ENCODE measurements at regions of chr16 and their contacts with region 1.

Region 1: DNA sequence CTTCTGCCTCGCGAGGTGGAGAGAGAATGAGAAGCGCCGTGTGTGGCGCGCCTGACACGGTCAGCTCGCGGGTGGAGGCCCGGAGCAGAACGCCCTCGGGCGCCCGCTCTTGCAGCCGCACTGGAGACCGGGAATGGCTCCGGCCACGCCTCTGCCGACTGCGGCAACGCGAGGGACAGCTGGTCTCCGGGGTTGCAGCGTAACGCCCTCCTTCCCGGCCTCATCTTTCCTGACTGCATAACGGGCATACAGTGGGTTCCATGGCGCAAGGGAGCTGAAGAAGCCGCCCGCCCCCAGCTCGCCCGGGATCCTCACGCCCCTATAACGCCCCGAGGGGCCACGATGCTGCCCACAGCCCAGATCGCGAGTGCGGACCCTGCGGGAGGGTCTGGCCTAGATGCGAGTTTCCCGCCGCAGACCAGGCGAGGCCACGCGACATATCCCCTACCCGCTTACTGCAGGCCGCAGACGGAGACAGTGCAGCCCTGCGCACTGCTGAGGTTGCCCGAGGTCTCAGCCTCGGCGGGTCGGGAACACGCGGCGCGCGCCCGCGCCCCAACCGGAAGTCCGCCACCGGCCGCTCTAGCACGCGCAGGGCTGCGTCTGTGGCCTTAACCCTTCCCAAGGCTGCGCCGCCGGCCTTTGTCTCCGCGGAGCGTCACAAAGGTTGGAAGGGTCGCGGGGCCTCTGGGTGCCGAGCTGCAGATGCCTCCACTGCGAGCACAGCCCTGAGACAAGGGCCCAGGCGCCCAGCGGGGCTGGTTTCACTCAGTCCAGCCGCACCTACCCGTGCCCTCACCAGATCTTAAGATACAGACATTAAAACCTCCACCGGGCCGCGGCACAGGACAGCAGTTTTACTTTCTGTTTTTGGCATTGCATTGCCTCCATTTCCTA is 18.8 kb downstream of the BCL7C start:
- DNase-seq: peak; percentile 57
- H3K4me3 ChIP-seq: peak overlapping the region; percentile 85
- H3K27ac ChIP-seq: peak overlapping the region; percentile 96
- H3K27me3 ChIP-seq: no peaks in the 10 kb centered on the region
- CTCF ChIP-seq: no peak

Region 2: DNA sequence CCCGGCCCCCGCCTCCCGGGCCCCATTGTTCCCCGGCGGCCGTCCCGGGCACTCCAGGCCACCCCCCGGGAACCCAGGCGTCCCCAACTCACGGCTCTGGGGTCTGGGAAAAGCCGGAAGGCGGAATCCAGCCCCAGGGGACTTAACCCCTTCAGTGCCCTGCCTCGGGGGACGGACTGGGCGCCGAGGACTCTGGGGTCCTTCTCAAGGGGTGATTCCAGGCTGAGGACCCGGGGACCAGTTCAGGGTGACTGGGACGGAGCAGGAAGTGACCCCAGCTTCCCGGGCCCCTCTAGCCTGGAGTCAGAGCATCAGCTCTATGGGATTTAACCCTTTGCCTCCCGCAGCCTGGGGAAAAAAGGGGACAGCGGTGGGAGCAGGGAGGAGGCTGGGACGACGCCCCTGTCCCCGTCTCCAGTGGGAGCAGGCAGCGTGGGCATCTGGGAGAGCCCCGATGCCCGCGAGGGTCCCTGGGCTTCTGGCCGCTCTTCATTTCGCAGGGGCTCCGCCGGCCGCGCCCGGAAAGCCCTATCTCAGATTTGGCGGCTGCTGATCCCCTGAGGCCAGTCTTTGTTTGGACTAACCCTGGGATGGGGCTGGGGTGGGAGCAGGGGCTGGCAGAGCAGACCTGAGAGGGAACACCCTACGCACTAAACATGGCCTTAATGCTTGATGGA is 88.0 kb before region 1 on chr16 and contains the start of gene ZNF629:
- CTCF ChIA-PET with region 1: no interaction called
- POLR2A ChIA-PET with region 1: interaction called, 11 read pairs
- DNase-seq: no peak
- H3K4me3 ChIP-seq: peak within 1 kb of the TSS; percentile 90
- H3K27ac ChIP-seq: peak within 1 kb of the TSS; percentile 73
- H3K27me3 ChIP-seq: no peaks in the 10 kb centered on the region
- CTCF ChIP-seq: no peak
- polyA plus RNA-seq, gene ZNF629: 5.1 and 8.0 TPM in 2 replicates

Region 3: GRCh38 chr16:30805370-30806169 is 69.5 kb before region 1 on chr16:
- CTCF ChIA-PET with region 1: no interaction called
- POLR2A ChIA-PET with region 1: interaction called, 22 read pairs
- DNase-seq: no peak
- H3K4me3 ChIP-seq: peak overlapping the region; percentile 79
- H3K27ac ChIP-seq: peak overlapping the region; percentile 87
- H3K27me3 ChIP-seq: peaks cover 2% of the 10 kb centered on the region
- CTCF ChIP-seq: peak; percentile 11; the same call in 1 of the 2 replicates

Region 4: DNA sequence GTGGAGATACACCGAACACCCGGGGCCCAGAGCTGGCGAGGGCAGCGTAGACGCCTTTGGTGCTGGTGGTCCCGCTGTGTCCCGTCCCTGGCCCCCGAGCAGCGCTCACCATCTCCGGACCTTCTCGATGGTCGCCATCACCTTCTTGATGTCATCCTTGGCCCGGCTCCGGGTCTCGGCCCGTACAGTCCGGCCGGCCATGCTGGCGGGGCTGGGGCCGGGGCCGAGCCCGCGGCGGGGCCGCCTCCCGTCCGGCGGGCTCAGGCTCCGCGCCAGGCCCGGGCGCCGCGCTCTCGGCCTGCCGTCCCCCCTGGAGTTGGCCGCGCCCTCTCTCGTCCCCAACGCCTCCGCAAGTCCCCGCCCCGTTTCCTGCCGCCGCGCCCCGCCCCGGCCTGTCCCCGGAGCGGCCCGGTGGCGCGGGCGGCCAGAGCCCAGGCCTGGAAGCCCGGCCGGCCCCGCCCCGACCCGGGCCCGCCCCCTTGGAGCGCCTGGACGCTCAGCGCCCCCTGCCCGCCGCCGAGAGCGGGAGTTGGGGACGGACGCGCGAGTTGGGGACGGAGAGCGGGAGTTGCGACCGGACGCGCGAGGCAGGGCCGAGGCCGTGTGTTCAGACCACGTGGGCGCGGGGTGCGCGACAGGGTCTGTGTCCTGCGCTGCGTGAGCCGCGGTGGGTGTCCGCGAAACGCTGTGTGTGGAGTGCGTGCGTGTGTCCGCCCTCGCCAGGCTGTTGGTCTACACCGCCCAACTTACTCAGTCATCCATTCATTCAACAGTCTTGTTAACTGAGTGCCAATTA is 18.9 kb after region 1 on chr16 and contains the start of gene BCL7C:
- CTCF ChIA-PET with region 1: interaction called, 3 read pairs
- POLR2A ChIA-PET with region 1: interaction called, 13 read pairs
- DNase-seq: no peak
- H3K4me3 ChIP-seq: peak within 1 kb of the TSS; percentile 93
- H3K27ac ChIP-seq: peak within 1 kb of the TSS; percentile 57
- H3K27me3 ChIP-seq: no peaks in the 10 kb centered on the region
- CTCF ChIP-seq: peak; percentile 48
- polyA plus RNA-seq, gene BCL7C: 27.7 and 27.8 TPM in 2 replicates

Region 5: DNA sequence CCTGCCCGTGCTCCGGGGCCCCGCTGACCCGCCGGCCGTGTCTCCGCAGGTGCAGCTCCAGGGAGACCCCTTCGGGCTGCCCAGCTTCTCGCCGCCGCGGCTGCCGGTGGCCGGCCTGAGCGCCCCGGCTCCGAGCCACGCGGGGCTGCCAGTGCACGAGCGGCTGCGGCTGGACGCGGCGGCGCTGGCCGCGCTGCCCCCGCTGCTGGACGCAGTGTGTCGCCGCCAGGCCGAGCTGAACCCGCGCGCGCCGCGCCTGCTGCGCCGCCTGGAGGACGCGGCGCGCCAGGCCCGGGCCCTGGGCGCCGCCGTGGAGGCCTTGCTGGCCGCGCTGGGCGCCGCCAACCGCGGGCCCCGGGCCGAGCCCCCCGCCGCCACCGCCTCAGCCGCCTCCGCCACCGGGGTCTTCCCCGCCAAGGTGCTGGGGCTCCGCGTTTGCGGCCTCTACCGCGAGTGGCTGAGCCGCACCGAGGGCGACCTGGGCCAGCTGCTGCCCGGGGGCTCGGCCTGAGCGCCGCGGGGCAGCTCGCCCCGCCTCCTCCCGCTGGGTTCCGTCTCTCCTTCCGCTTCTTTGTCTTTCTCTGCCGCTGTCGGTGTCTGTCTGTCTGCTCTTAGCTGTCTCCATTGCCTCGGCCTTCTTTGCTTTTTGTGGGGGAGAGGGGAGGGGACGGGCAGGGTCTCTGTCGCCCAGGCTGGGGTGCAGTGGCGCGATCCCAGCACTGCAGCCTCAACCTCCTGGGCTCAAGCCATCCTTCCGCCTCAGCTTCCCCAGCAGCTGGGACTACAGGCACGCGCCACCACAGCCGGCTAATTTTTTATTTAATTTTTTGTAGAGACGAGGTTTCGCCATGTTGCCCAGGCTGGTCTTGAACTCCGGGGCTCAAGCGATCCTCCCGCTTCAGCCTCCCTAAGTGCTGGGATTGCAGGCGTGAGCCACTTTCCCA is 27.2 kb after region 1 on chr16:
- CTCF ChIA-PET with region 1: interaction called, 4 read pairs
- POLR2A ChIA-PET with region 1: interaction called, 10 read pairs
- DNase-seq: no peak
- H3K4me3 ChIP-seq: peak overlapping the region; percentile 45
- H3K27ac ChIP-seq: peak overlapping the region; percentile 61
- H3K27me3 ChIP-seq: no peaks in the 10 kb centered on the region
- CTCF ChIP-seq: no peak

Region 6: DNA sequence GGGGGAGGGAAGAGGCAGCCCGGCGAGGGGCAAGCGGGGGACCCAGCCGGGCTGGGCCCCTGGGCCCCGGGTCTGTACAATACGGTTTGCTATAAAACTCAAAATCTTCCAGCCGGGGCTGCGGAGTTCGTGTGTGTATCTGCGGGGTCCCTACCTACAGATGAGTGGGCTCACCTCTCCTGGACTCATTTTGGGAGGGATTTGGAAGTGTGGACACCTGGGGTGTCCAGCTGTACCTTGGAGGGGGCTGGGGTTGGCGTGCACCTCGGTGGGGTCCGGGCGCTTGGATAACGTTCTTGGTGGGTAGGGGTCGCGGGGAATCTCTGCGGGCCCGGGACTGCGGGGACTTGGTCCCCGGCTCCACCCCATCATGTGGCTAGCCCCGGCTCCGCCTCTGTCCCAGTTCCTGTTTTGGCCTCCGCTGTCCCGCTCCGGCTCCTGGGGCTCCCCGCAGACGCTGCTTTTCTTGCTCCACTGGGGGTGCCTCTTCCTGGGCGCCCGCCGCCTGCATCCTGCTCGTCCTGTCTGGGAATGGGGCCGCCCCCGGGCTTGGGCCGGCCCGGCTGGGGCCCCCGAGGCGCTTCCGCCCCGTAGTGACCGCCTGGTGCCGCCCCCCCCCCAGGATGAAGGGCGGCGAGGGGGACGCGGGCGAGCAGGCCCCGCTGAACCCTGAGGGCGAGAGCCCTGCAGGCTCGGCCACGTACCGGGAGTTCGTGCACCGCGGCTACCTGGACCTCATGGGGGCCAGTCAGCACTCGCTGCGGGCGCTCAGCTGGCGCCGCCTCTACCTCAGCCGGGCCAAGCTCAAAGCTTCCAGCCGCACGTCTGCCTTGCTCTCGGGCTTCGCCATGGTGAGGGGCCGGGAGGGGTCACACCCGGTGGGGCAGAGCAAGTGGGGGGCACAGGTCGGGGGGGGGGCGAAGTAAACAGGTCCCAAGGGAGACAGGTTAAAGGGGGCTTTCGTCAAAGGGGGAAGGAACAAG is 73.9 kb after region 1 on chr16 and contains the start of gene ORAI3:
- CTCF ChIA-PET with region 1: no interaction called
- POLR2A ChIA-PET with region 1: no interaction called
- DNase-seq: no peak
- H3K4me3 ChIP-seq: peak within 1 kb of the TSS; percentile 78
- H3K27ac ChIP-seq: peak within 1 kb of the TSS; percentile 52
- H3K27me3 ChIP-seq: no peaks in the 10 kb centered on the region
- CTCF ChIP-seq: no peak
- polyA plus RNA-seq, gene ORAI3: 23.7 and 29.5 TPM in 2 replicates